SK-N-SH (cell line): ENCODE measurements at regions of chr11 and their contacts with region 1.

Region 1: DNA sequence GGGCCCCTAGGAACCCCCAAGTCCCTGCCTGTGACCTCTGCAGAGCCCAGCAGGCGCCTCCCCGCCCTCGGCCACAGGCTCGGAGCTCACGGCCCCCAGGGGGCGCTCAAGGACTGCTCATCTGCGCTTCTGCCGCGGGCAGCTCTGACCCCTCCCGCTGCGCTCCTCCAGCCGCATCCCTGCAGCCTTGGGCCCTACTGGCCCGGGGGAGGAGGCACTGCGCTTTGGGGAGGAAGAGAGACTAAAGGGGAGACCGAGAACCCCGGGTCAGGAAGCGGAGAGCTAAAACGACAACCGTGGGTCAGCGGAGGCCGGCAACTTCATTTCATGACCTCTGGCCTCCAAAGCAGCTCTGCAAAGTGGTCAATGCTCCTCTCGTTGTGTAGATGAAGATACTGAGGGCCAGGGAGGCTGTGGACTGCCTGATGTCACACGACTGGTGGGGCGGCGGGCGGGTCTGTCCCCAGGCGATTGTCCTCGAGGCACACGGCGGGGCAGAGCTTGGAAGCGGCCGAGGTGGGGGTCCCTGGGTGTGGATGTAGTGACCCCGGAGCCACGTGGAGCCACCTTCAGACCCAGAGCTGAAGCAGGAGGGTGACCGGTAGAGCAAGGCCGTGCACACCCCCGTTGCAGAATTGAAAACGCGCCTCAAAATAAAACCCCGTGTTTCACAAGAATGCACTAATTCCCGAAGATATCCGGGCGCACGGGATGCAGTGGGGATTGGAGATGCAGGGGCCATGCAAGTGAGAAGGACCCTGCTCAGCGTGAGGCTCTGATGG is 2.7 kb upstream of the KRTAP5-6 start:
- DNase-seq: peak; percentile 95
- H3K4me3 ChIP-seq: peak overlapping the region in 1 of 2 experiments; percentile 51; a peak in 1 of 4 replicates
- H3K27ac ChIP-seq: peak overlapping the region in 1 of 2 experiments; percentile 73; a peak in 1 of 4 replicates
- H3K4me1 ChIP-seq: peaks cover 6 to 13% of the 10 kb centered on the region in 2 experiments; a peak in 2 of 4 replicates
- H3K27me3 ChIP-seq: no peaks in the 10 kb centered on the region
- CTCF ChIP-seq: peak; percentile 85
- EP300 ChIP-seq: no peak
- RAD21 ChIP-seq: peak; percentile 91

Region 2: DNA sequence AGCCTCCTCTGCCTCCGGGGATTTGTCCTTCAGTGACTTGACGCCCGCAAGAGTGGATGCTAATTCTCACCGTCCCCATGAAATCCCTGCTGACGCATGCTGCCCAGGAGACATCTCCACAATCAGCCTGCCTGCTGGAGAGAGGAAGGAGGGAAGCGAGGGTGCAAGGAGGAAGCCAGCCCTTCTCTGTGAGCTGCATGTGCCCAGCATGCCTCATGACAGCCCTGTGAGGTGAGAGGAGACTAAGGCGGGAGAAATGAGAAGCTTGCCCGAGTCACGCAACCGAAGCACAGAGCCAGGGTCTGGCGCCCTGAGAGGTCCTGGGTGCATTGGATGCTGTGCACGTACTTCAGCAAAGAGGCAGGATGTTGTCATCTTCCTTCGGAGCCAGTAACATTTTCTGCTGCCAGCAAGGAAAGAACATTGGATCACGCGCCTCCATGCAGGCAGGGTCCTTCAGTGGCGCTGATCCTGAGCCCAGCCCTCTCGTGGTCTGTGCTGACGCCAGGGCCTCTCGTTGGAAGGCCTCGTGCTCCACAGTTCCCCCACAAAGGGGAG is 24.5 kb before region 1 on chr11:
- CTCF ChIA-PET with region 1: interaction called, 61 read pairs
- POLR2A ChIA-PET with region 1: no interaction called
- DNase-seq: peak; percentile 27
- H3K4me3 ChIP-seq: no peak overlapping the region
- H3K27ac ChIP-seq: no peak overlapping the region
- H3K4me1 ChIP-seq: no peaks in the 10 kb centered on the region; a peak in 1 of 4 replicates
- H3K27me3 ChIP-seq: no peaks in the 10 kb centered on the region; the same call in 1 of the 2 replicates
- CTCF ChIP-seq: no peak
- EP300 ChIP-seq: no peak
- RAD21 ChIP-seq: no peak

Region 3: DNA sequence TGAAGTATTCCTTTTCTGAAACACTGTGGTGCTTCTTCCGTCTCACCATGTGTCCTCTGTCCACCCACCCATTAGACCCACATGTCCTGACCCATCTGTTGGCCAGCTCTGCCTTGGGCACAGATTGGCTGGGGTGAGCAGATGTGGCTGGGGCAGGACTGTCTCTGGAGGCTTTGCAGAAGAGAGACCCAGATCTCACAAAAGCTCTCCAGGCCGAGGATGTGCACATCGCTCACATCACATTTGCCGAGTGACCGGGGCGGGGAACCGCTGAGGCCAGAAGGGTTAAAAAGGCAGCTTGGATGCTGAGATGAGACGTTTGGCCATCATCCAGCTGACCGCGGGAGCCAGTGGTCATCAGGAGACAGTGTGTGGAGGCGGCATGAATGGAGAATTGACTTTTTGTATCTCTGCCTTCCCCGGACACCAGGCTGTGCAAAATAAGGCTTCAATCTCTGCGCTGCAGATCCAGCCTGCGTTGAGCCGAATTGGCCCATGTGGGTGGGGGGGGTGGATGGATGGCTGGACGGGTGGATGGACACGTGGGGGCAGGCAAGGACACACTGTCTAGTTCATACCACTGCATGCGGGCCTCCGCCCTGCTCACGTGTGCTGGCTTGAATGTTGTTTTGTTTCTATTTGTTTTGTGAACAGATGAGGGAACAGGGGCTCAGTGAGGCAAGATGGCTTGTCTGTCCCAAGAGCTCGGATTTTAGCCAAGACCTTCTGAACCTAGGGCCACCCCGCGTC is 50.1 kb after region 1 on chr11:
- CTCF ChIA-PET with region 1: interaction called, 39 read pairs
- POLR2A ChIA-PET with region 1: interaction called, 5 read pairs
- DNase-seq: peak; percentile 63
- H3K4me3 ChIP-seq: no peak overlapping the region
- H3K27ac ChIP-seq: peak overlapping the region in 1 of 2 experiments; percentile 92; a peak in 2 of 4 replicates
- H3K4me1 ChIP-seq: peaks cover 0 to 52% of the 10 kb centered on the region in 2 experiments; a peak in 1 of 4 replicates
- H3K27me3 ChIP-seq: no peaks in the 10 kb centered on the region
- CTCF ChIP-seq: no peak
- EP300 ChIP-seq: no peak
- RAD21 ChIP-seq: no peak

Region 4: GRCh38 chr11:1817511-1817910 is 123.3 kb after region 1 on chr11:
- CTCF ChIA-PET with region 1: interaction called, 26 read pairs
- POLR2A ChIA-PET with region 1: no interaction called
- DNase-seq: no peak
- H3K4me3 ChIP-seq: no peak overlapping the region
- H3K27ac ChIP-seq: no peak overlapping the region
- H3K4me1 ChIP-seq: no peaks in the 10 kb centered on the region
- H3K27me3 ChIP-seq: no peaks in the 10 kb centered on the region; the same call in 1 of the 2 replicates
- CTCF ChIP-seq: no peak
- EP300 ChIP-seq: no peak
- RAD21 ChIP-seq: no peak

Region 5: GRCh38 chr11:1870721-1871466 is 176.6 kb after region 1 on chr11:
- CTCF ChIA-PET with region 1: interaction called, 20 read pairs
- POLR2A ChIA-PET with region 1: no interaction called
- DNase-seq: no peak
- H3K4me3 ChIP-seq: no peak overlapping the region
- H3K27ac ChIP-seq: no peak overlapping the region
- H3K4me1 ChIP-seq: peaks cover 0 to 33% of the 10 kb centered on the region in 2 experiments; a peak in 1 of 4 replicates
- H3K27me3 ChIP-seq: no peaks in the 10 kb centered on the region
- CTCF ChIP-seq: no peak
- EP300 ChIP-seq: no peak
- RAD21 ChIP-seq: no peak

Region 6: DNA sequence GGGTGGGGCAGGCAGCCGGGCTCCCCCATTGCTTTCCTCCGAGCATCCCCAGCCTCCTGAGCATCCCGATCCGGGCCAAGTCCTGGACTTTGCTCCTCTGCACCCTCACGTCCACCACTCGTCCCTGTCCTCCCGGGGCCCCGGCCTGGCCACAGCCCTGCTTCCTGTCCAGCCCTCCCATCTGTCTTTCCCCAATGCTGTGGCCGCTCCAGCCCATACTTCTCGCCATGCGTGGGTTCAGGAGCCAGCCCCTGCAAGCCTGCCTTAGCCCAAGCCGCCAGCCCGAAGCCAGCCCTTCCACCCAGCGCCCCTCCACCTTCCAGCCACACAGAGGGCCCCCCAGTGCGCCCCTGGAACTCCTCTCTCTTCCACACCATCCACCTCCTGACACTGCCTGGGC is 276.7 kb after region 1 on chr11:
- CTCF ChIA-PET with region 1: interaction called, 12 read pairs
- POLR2A ChIA-PET with region 1: no interaction called
- DNase-seq: no peak
- H3K4me3 ChIP-seq: no peak overlapping the region
- H3K27ac ChIP-seq: no peak overlapping the region; a peak in 1 of 4 replicates
- H3K4me1 ChIP-seq: no peaks in the 10 kb centered on the region
- H3K27me3 ChIP-seq: no peaks in the 10 kb centered on the region
- CTCF ChIP-seq: no peak
- EP300 ChIP-seq: no peak
- RAD21 ChIP-seq: no peak

Region 7: GRCh38 chr11:2151500-2152257 is 457.4 kb after region 1 on chr11:
- CTCF ChIA-PET with region 1: interaction called, 230 read pairs
- POLR2A ChIA-PET with region 1: interaction called, 5 read pairs
- DNase-seq: peak; percentile 90
- H3K4me3 ChIP-seq: peak overlapping the region in 1 of 2 experiments; percentile 5; a peak in 1 of 4 replicates
- H3K27ac ChIP-seq: peak overlapping the region in 1 of 2 experiments; percentile 4; a peak in 1 of 4 replicates
- H3K4me1 ChIP-seq: peaks cover 0 to 21% of the 10 kb centered on the region in 2 experiments; a peak in 1 of 4 replicates
- H3K27me3 ChIP-seq: peaks cover 28% of the 10 kb centered on the region
- CTCF ChIP-seq: peak; percentile 70
- EP300 ChIP-seq: no peak
- RAD21 ChIP-seq: peak; percentile 85